ENCODE measurements at regions of chr2 and their contacts with region 1.

Region 1: GRCh38 chr2:170973492-170974303 is 44.6 kb downstream of the GORASP2 start:
- ATAC-seq: peak; percentile 86 to 96 (median 94)
- H3K4me3 ChIP-seq: peak overlapping the region; percentile 23 to 47 (median 37)
- H3K27ac ChIP-seq: peak overlapping the region; percentile 2 to 25
- H3K4me1 ChIP-seq: peaks cover 3 to 4% of the 10 kb centered on the region in 2 donors

Region 2: GRCh38 chr2:171433763-171434670 is 460.3 kb after region 1 on chr2 and contains the starts of genes DCAF17 and METTL8:
- in situ Hi-C with region 1: loop called in 2 of 9 experiments (anchors 10 to 25 kb)
- ATAC-seq: peak; percentile 86 to 97 (median 94)
- H3K4me3 ChIP-seq: peak within 1 kb of the TSS; percentile 64 to 94 (median 69)
- H3K27ac ChIP-seq: peak within 1 kb of the TSS; percentile 76 to 87
- H3K4me1 ChIP-seq: peaks cover 7 to 12% of the 10 kb centered on the region in 2 donors
- total RNA-seq, gene DCAF17: 12.7 to 26.5 (median 18.3) TPM
- total RNA-seq, gene METTL8: 5.2 to 36.9 (median 8.2) TPM

Region 3: DNA sequence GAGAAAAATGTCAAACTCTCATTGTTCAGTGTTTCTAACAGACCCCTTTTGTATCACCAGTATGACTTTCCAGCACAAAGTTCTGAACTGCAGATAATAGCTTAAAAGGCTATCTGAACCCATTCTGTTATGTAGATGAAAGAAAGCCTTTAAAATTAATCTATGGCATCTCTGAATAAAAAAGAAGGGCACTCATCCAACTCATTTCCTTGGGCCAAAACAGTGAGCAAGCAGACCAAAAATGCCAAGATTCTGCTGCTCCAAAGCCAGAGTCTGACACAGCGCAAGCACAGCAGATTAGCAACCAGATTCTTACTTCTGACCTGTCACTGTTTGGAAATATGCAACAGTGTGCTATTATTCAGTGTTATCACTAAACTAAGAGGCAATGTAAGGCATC is 1431.1 kb after region 1 on chr2:
- in situ Hi-C with region 1: no loop called
- ATAC-seq: peak in 3 of 8 experiments; percentile 15 to 81 (median 59)
- H3K4me3 ChIP-seq: no peak overlapping the region
- H3K27ac ChIP-seq: no peak overlapping the region
- H3K4me1 ChIP-seq: peaks cover 22 to 30% of the 10 kb centered on the region in 2 donors

Measured in motor neuron (in vitro differentiated cells).